OCI-LY7 (cell line): ENCODE measurements at regions of chr20 and their contacts with region 1.

Region 1: GRCh38 chr20:2899243-2899642 is 26.0 kb downstream of the PTPRA start:
- DNase-seq: no peak
- H3K4me3 ChIP-seq: no peak overlapping the region
- H3K27ac ChIP-seq: no peak overlapping the region
- H3K4me1 ChIP-seq: peaks cover 37% of the 10 kb centered on the region
- CTCF ChIP-seq: no peak

Region 2: GRCh38 chr20:2946988-2947961 is 48.0 kb after region 1 on chr20:
- CTCF ChIA-PET with region 1: no interaction called
- POLR2A ChIA-PET with region 1: interaction called, 3 read pairs
- intact Hi-C with region 1: loop called (anchors 5 kb)
- DNase-seq: no peak
- H3K4me3 ChIP-seq: no peak overlapping the region
- H3K27ac ChIP-seq: no peak overlapping the region
- H3K4me1 ChIP-seq: no peaks in the 10 kb centered on the region
- CTCF ChIP-seq: no peak